ENCODE measurements at regions of chr3 and their contacts with region 1.

Region 1: DNA sequence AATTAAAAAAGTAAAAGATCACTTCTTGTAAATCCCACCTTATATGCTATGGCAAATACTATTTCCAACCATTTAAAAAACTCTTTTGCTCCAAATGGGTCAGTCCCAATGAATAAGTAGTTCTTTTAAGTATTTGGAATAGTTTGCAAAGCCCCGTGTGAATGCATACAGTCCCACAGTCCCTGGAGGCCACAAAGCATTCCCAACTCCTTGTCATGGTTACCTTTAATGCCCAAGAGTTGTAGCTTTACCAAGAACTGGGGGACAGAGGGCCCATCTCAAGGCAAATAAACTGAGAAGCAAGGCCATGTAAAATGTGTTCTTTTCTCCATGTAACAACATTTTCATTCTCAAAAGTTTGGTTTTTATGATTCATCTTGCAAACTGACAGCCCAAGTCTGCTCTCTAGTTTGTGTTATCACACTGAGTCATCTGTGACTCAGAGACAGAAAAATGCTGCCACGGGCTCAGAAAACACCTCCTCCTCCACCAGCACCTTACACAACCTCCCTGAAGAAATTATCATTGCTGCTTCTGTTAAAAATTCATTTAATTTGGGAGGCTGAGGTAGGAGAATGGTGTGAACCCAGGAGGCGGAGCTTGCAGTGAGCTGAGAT is 336.2 kb downstream of the ERC2 start:
- DNase-seq: no peak
- H3K4me3 Mint-ChIP-seq: no peak overlapping the region
- H3K27ac Mint-ChIP-seq: no peak overlapping the region
- H3K4me1 Mint-ChIP-seq: peaks cover 6% of the 10 kb centered on the region
- H3K27me3 Mint-ChIP-seq: peaks cover 7% of the 10 kb centered on the region

Region 2: GRCh38 chr3:56291244-56291680 is 159.2 kb after region 1 on chr3:
- intact Hi-C with region 1: loop called (anchors 1 kb)
- DNase-seq: peak; percentile 14
- H3K4me3 Mint-ChIP-seq: peak overlapping the region; percentile 40
- H3K27ac Mint-ChIP-seq: peak overlapping the region; percentile 59
- H3K4me1 Mint-ChIP-seq: peaks cover 31% of the 10 kb centered on the region
- H3K27me3 Mint-ChIP-seq: peaks cover 5% of the 10 kb centered on the region

Measured in activated T-helper 1 cell treated with anti-CD3 and anti-CD28 coated beads, Interleukin-12 subunit alpha, Interleukin-12 subunit beta, Interleukin-2, Interleukin-4 antibody, amounts not matched to agents 30 ng/mL and 10 ng/mL and 1 ng/mL, durations not matched to agents 14 hours and 24 hours and 36 hours (primary cell).